Common myeloid progenitor, CD34-positive (primary cell): ENCODE measurements at regions of chr16 and their contacts with region 1.

Region 1: DNA sequence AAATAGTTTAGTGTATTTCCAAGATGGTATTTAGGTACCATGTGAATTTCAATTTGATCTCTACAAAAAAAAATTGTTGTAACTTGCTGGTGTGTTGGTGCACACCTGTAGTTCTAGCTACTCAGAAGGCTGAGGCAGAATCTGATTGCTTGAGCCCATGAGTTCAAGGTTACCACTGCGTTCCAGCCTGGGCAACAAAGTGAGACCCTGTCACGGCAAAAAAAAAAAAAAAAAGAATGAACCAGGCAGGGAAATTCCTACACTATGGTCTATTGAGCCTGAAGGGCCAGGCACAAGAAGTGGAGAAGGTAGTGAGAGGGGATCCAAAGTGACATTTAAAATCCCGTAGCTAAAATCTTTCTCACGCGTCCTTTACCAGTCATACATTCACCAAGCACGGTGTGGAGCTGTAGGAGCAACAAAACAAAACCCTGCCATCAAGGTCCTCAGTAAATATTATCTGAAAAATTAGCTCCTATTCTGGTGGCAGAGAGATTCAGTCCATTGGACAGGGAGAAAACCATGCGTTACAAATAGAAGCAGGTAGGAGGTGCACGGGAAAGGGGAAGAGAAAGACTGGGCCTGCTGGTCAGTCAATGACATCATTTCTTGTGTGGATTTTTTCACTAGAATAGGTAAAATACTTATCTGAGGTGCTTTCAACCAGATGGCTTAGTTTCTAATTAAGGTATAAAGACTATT is 27.3 kb downstream of the TXNDC11 start:
- DNase-seq: no peak
- H3K4me3 ChIP-seq: no peak overlapping the region
- H3K27ac ChIP-seq: no peak overlapping the region
- H3K4me1 ChIP-seq: peaks cover 0 to 5% (median 0%) of the 10 kb centered on the region in 4 experiments
- H3K27me3 ChIP-seq: no peaks in the 10 kb centered on the region

Region 2: GRCh38 chr16:11386791-11387546 is 328.4 kb before region 1 on chr16:
- CTCF ChIA-PET with region 1: interaction called, 10 read pairs
- POLR2A ChIA-PET with region 1: no interaction called
- DNase-seq: peak; percentile 34 to 48 (median 45)
- H3K4me3 ChIP-seq: no peak overlapping the region
- H3K27ac ChIP-seq: no peak overlapping the region
- H3K4me1 ChIP-seq: peaks cover 0 to 3% (median 0%) of the 10 kb centered on the region in 4 experiments
- H3K27me3 ChIP-seq: peaks cover 0 to 12% (median 0%) of the 10 kb centered on the region in 5 experiments

Region 3: GRCh38 chr16:11396241-11397048 is 319.0 kb before region 1 on chr16:
- CTCF ChIA-PET with region 1: interaction called, 18 read pairs
- POLR2A ChIA-PET with region 1: no interaction called
- DNase-seq: peak; percentile 41 to 53 (median 52)
- H3K4me3 ChIP-seq: no peak overlapping the region
- H3K27ac ChIP-seq: no peak overlapping the region
- H3K4me1 ChIP-seq: no peaks in the 10 kb centered on the region
- H3K27me3 ChIP-seq: no peaks in the 10 kb centered on the region

Region 4: GRCh38 chr16:11530171-11530940 is 185.0 kb before region 1 on chr16:
- CTCF ChIA-PET with region 1: interaction called, 14 read pairs
- POLR2A ChIA-PET with region 1: no interaction called
- DNase-seq: no peak
- H3K4me3 ChIP-seq: no peak overlapping the region
- H3K27ac ChIP-seq: no peak overlapping the region
- H3K4me1 ChIP-seq: peaks cover 0 to 12% (median 3%) of the 10 kb centered on the region in 4 experiments
- H3K27me3 ChIP-seq: peaks cover 0 to 16% (median 0%) of the 10 kb centered on the region in 5 experiments